ENCODE measurements at regions of chr13 and their contacts with region 1.

Region 1: DNA sequence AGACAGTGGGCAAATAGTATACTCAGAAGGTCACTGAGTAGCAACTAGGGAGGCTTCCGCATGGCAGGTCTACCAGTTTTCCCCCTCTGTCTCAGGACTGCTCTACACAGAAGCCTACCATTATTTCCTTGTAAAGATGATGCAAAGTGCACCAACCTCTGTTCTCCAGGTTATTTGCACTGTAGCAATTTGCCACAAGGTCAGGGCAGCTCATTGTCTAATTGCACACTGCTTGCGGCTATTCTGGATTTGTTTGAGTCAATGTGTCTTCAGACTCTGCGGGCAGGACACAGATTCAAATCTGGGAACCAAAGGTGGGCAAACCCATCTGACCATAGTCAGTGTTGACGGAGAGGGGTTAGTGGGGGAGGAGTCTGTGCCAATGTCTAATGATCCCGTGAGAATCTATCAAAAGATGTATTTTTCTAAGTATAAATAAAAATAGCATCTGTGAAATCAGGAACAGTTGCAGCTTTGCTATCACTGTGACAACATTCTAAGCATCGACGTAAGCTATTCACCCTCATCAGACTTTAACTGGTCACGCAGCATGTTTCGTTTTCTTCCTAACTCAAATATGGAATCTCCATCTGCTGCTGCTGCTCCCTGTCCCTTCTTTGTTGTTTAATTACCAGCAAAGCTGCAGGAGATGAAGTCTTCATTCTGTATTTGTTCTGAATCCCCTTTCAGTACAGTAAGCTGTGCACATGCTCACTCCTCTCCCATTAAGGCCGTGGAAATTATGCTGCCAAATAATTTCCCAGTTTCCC is 26.4 kb downstream of the CYSLTR2 start:
- H3K4me3 Mint-ChIP-seq: no peak overlapping the region
- H3K27ac Mint-ChIP-seq: peak overlapping the region; percentile 77
- H3K4me1 Mint-ChIP-seq: peaks cover 78% of the 10 kb centered on the region
- H3K27me3 Mint-ChIP-seq: no peaks in the 10 kb centered on the region

Region 2: DNA sequence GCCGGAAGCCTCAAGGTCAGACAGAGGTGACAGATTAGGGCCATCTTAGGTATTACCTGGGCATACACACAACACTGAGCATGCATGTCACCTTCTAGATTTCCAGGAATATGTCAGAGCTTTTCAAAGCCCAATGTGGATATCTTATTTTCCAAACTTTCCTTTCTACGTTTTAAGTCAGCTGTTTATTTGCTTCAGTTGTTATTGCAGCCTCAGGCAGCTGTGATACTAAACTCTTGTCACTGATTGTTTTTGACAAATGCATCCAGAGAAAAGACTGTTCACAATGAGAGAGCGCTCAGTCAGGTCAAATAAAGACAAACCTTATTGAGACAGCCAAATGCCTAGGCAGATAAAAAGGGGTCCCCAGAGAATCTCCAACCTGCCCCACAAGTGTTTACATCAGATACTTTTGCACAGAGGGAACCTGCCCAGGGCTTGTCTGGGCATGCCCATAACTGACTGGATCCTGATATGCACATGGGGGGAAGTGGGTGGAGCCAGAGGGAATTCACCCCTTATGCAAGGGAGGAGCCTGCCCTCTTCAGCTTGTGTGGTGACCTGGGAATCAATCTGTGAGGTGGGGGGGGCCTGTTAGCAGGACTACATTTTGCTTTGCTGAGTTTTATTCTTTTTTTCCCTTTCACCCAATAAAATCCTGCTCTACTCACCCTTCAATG is 613.6 kb before region 1 on chr13:
- intact Hi-C with region 1: no loop called
- H3K4me3 Mint-ChIP-seq: no peak overlapping the region
- H3K27ac Mint-ChIP-seq: no peak overlapping the region
- H3K4me1 Mint-ChIP-seq: no peaks in the 10 kb centered on the region
- H3K27me3 Mint-ChIP-seq: no peaks in the 10 kb centered on the region

Region 3: DNA sequence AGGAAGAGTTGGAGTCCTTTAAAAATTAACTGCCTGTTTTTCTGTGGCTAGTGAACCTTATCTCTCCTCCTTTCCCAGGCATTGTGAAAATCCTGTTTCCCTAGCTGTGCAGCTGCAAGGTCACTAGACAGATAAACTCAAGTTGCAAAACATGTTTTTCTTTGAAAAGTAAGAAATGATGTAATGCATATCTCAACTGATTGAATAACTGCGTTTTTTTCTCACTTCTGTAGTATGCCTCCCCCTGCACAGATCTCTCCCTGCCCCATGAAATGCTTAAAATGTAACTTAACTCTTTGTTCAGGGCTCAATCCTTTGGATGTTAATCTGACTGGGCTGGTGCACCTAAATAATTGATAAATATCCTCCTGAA is 54.0 kb before region 1 on chr13:
- intact Hi-C with region 1: no loop called
- H3K4me3 Mint-ChIP-seq: no peak overlapping the region
- H3K27ac Mint-ChIP-seq: no peak overlapping the region
- H3K4me1 Mint-ChIP-seq: peaks cover 12% of the 10 kb centered on the region
- H3K27me3 Mint-ChIP-seq: no peaks in the 10 kb centered on the region

Region 4: DNA sequence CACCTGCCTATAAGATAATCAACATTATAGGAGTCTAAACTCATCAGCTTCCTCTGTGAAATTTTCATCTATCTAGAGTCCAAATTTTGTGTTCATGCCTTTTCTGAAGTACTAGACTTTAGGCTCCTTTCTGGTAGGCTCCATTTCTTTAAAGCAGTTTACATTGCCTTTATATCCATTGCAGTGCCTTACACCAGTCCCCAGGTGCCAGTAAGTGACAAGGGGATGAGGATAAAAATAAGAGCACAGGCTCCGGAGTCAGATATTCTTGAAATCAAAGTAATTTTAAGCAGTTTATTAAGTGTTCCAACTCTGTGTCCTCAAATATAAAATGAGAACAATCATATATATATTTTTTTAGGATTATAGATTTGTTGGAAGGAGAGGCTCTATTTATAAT is 36.9 kb before region 1 on chr13:
- intact Hi-C with region 1: loop called (anchors 5 kb)
- H3K4me3 Mint-ChIP-seq: no peak overlapping the region
- H3K27ac Mint-ChIP-seq: no peak overlapping the region
- H3K4me1 Mint-ChIP-seq: peaks cover 35% of the 10 kb centered on the region
- H3K27me3 Mint-ChIP-seq: no peaks in the 10 kb centered on the region

Region 5: GRCh38 chr13:48660361-48661076 is 19.6 kb before region 1 on chr13:
- intact Hi-C with region 1: loop called (anchors 2 kb)
- H3K4me3 Mint-ChIP-seq: no peak overlapping the region
- H3K27ac Mint-ChIP-seq: peak overlapping the region; percentile 94
- H3K4me1 Mint-ChIP-seq: peaks cover 53% of the 10 kb centered on the region
- H3K27me3 Mint-ChIP-seq: no peaks in the 10 kb centered on the region

Measured in dendritic cell treated with granulocyte-macrophage colony-stimulating factor and Interleukin-4, amounts not matched to agents 40 ng/mL and 50 ng/mL, for 4 days (primary cell).